CD8-positive, alpha-beta T cell (primary cell): ENCODE measurements at regions of chr9 and their contacts with region 1.

Region 1: DNA sequence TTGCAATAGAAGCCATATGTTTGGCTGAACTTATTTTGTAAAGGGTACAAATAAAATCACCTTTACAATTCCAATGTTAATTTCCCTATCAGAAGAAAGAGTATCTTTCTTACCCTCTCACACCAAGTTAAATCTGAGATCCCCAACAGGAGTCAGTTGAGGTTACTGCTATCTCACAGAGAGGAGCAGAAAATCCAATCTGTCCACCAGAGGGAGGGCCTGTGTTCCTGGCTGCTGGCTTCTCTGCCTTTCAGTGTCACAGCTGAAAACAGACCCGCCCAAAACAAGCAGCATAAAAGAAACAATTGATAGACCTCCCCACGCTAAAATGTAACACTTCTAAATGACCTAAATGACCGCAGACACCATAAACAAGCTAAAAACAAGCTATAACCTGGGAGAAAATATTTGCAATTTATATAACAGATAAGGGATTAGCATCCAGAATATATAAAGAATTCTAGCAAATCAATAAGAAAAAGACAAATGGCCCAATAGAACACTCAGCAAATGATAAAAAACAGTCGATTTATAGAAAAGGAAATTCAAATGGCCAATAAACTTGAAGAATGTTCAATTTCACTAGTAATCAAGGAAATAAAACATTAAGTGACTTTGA is 24.5 kb upstream of the MVB12B start:
- DNase-seq: peak; percentile 22 to 79 (median 59)
- ATAC-seq: peak; percentile 87
- H3K4me3 ChIP-seq: no peak overlapping the region
- H3K4me3 Mint-ChIP-seq: no peak overlapping the region
- H3K27ac ChIP-seq: no peak overlapping the region
- H3K27ac Mint-ChIP-seq: no peak overlapping the region
- H3K4me1 ChIP-seq: no peaks in the 10 kb centered on the region
- H3K4me1 Mint-ChIP-seq: peaks cover 3% of the 10 kb centered on the region
- H3K27me3 ChIP-seq: no peaks in the 10 kb centered on the region
- H3K27me3 Mint-ChIP-seq: peaks cover 4% of the 10 kb centered on the region
- CTCF ChIP-seq: peak; percentile 71

Region 2: DNA sequence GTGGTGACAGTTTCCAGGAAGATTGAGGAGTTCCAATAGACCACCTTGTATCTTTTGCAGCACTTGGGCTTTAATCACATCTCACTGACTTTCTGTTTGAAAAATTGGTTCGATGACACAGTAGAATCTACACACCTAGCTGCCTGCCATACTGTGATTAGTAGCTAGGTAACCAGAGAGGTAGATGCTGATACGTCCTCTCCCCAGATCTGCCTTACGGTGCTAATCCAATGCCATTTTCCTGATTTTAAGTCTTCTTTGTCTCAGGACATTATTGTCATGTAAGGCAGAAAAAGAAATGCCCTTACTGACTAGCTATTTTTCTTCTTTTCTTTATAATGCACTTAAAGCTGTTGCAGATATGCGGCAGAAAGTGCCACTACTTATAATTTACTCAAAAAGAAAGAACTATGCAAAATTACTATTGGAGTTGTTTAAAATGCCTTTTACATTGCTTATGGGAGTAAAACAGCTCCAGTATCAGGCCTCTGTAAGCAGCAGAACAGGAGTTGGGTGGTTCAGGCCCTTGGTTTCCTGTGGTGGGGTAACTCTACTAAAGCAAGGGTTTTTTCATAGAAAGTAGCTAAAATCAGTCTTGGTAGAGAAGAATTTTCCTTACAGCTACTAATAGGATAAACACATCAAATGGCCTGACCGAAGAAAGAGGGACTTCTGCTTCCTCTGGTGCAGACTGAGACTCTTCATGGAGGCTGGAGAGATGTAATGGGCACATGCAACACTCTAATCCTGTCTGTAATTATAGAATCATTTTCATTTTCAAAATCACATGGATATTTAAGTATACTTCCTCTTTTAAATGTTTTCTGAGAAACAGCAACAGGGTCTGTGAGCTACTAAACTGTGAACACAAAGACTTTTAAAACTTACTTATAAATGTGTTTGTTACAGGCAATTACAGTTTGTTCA is 772.2 kb before region 1 on chr9:
- CTCF ChIA-PET with region 1: no interaction called
- POLR2A ChIA-PET with region 1: no interaction called
- intact Hi-C with region 1: no loop called
- DNase-seq: no peak
- ATAC-seq: no peak
- H3K4me3 ChIP-seq: no peak overlapping the region
- H3K4me3 Mint-ChIP-seq: no peak overlapping the region
- H3K27ac ChIP-seq: no peak overlapping the region
- H3K27ac Mint-ChIP-seq: peak overlapping the region; percentile 71
- H3K4me1 ChIP-seq: peaks cover 6% of the 10 kb centered on the region
- H3K4me1 Mint-ChIP-seq: peaks cover 27% of the 10 kb centered on the region
- H3K27me3 ChIP-seq: no peaks in the 10 kb centered on the region
- H3K27me3 Mint-ChIP-seq: no peaks in the 10 kb centered on the region
- CTCF ChIP-seq: no peak

Region 3: DNA sequence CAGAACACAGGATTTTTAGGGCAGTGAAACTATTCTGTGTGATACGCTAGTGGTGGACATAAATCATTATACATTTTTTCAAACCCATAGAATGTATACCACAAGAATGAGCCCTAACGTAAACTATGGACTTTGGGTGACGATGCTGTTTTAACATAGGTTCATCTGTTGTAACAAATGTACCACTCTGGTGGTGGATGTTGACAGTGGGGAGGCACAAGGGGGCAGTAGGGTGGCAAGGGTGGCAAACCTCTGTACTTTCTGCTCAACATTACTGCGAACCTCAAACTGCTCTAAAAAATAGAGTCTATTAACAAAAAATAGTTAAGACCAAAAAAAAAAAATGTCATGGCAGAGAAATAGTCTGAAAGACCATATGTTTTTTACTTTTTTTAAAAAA is 15.4 kb after region 1 on chr9:
- CTCF ChIA-PET with region 1: interaction called, 11 read pairs
- POLR2A ChIA-PET with region 1: no interaction called
- intact Hi-C with region 1: no loop called
- DNase-seq: peak; percentile 30 to 78 (median 62)
- ATAC-seq: peak; percentile 92
- H3K4me3 ChIP-seq: no peak overlapping the region
- H3K4me3 Mint-ChIP-seq: no peak overlapping the region
- H3K27ac ChIP-seq: no peak overlapping the region
- H3K27ac Mint-ChIP-seq: no peak overlapping the region
- H3K4me1 ChIP-seq: peaks cover 3% of the 10 kb centered on the region
- H3K4me1 Mint-ChIP-seq: peaks cover 14% of the 10 kb centered on the region
- H3K27me3 ChIP-seq: no peaks in the 10 kb centered on the region
- H3K27me3 Mint-ChIP-seq: no peaks in the 10 kb centered on the region
- CTCF ChIP-seq: peak; percentile 71

Region 4: DNA sequence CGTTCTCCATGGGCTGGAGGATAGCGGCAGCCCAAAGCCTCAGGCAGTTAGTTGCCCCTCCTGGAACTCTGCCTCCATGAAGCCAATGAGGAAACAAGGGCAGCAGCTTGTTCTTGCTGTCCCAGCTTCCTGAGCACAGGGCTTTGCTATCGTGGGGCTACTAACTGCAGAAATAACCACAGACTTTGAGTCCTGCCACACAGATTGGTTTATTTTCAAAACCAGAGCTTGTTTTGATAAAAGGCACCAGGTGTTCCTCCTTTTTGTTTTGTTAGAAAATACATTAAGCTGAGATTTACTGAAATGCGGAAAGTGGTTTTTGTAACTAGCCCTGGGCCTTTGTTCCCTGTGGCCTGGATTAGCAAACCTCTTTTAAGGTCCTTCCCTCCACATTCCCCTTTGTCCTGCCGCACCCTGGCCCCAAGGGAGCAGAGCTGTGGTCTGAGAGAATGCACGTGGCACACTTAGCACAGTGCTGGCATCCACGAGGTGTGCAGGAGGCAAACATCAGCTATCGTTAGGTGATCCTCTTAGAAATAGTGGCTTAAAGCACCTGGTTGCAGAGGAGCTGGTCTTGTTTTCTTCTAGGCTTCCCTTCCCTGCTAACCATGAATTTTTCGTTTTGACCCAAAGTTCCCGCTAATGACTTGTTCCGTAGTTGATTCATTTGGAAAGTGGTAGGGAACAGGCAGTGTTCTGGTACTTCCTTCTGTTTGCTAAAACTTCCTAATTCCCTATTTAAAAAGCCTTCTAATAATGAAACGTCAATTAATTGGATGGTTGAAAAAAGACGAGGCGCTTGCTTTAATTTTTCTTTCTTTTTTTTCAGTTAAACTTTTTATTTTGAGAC is 46.0 kb after region 1 on chr9:
- CTCF ChIA-PET with region 1: interaction called, 3 read pairs
- POLR2A ChIA-PET with region 1: no interaction called
- intact Hi-C with region 1: loop called in 1 of 2 experiments (anchors 1 kb)
- DNase-seq: no peak
- ATAC-seq: no peak
- H3K4me3 ChIP-seq: no peak overlapping the region
- H3K4me3 Mint-ChIP-seq: no peak overlapping the region
- H3K27ac ChIP-seq: no peak overlapping the region
- H3K27ac Mint-ChIP-seq: peak overlapping the region; percentile 57
- H3K4me1 ChIP-seq: peaks cover 7% of the 10 kb centered on the region
- H3K4me1 Mint-ChIP-seq: peaks cover 38% of the 10 kb centered on the region
- H3K27me3 ChIP-seq: no peaks in the 10 kb centered on the region
- H3K27me3 Mint-ChIP-seq: no peaks in the 10 kb centered on the region
- CTCF ChIP-seq: no peak